Activated B cell treated with CpG ODN at 0.5 μM for 24 hours (primary cell): ENCODE measurements at regions of chr2 and their contacts with region 1.

Region 1: DNA sequence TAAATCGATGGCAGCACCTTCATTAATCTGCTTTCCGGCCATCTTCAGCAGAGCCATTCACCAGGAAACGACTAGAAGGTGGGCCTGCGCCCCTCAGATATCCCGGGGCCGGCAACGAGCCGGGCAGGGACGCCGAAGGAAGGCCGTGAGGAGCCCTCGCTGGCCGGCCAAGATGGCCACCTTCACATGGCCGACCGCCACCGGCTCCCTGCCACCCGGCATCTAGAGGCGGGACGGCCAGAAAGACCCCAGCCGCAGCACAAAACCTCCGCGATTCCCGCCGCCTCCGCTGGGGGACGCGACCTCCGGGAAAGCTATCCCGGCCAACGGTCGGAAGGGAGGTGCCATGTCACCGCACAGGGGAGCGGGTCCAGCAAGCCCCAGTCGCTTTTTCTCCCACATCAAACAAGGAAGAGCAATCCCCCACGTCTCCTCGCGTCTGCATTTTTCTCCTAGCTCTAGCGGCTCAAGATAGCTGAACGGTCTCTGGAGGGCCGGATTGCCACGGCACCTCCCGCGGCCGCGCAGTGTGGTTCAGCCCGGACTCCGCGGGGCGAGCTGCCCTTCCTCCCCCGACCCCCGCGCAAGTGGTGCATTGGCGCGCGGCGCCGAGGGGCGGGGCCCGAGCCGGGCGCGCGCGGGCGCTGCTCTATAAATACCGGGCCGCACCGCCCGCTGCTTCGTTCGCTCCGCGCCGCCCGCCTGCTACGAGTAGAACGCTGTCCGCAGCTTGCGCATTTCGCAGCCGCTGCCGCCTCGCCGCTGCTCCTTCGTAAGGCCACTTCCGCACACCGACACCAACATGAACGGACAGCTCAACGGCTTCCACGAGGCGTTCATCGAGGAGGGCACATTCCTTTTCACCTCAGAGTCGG is at the start of gene MAT2A:
- DNase-seq: peak; percentile 94
- ATAC-seq: peak; percentile 80
- H3K4me3 Mint-ChIP-seq: peak within 1 kb of the TSS; percentile 96
- H3K27ac Mint-ChIP-seq: peak within 1 kb of the TSS; percentile 99
- H3K4me1 Mint-ChIP-seq: peaks cover 37% of the 10 kb centered on the region
- H3K27me3 Mint-ChIP-seq: no peaks in the 10 kb centered on the region
- CTCF ChIP-seq: no peak
- total RNA-seq, gene MAT2A: 228 and 265 TPM in 2 replicates

Region 2: GRCh38 chr2:85390941-85391669 is 147.6 kb before region 1 on chr2:
- CTCF ChIA-PET with region 1: interaction called, 21 read pairs
- POLR2A ChIA-PET with region 1: interaction called, 43 read pairs
- intact Hi-C with region 1: loop called (anchors 1 kb)
- DNase-seq: peak; percentile 69
- ATAC-seq: peak; percentile 22
- H3K4me3 Mint-ChIP-seq: no peak overlapping the region
- H3K27ac Mint-ChIP-seq: peak overlapping the region; percentile 81
- H3K4me1 Mint-ChIP-seq: peaks cover 30% of the 10 kb centered on the region
- H3K27me3 Mint-ChIP-seq: no peaks in the 10 kb centered on the region
- CTCF ChIP-seq: no peak

Region 3: DNA sequence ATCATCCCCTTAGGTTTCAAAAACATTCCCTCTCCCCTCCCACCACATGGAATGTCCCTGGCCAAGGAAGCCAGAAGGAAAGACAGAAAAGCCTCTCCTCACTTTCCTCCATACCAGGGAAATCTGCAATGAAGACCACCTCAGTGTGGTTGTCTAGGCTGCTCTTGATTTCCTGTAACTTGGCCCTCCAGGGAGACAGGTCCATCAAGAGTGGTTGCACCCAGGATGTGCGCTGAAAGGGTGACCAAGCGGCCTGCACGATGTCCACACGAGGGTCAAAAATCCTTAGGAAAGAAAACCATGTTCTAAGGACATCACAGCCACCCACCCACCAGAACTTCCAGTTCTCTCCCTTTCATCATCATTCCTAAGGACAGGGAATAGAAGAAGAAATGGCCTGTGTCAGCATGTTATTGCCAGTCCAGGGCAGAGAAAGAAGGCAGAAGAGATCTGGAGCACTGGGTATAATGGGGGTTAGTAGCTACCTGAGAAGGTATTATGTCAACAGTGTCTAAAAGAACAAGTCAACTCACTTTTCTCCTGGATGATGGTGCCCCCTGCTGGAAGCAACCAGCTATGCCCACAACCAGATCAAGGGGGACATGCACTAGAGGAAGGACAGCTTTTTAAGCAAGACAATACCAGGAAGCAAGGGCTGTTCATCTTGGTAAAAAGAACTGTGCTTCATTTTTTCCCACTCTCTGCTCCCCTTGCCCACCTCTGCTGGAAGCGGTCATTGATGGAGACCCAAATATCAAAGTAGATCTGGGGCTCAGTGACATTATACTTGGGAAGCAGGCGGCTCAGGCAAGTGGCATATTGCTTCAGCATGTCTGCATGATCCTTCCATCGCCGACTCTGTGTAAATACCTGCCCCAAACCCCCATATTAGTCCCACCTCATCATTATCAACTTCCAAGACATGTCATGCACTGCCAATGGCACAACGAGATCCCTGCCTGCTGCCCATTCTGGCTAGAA is 13.3 kb after region 1 on chr2:
- CTCF ChIA-PET with region 1: interaction called, 52 read pairs
- POLR2A ChIA-PET with region 1: interaction called, 84 read pairs
- intact Hi-C with region 1: loop called (anchors 1 kb)
- DNase-seq: peak; percentile 63
- ATAC-seq: peak; percentile 98
- H3K4me3 Mint-ChIP-seq: no peak overlapping the region
- H3K27ac Mint-ChIP-seq: no peak overlapping the region
- H3K4me1 Mint-ChIP-seq: peaks cover 4% of the 10 kb centered on the region
- H3K27me3 Mint-ChIP-seq: no peaks in the 10 kb centered on the region
- CTCF ChIP-seq: peak; percentile 28

Region 4: DNA sequence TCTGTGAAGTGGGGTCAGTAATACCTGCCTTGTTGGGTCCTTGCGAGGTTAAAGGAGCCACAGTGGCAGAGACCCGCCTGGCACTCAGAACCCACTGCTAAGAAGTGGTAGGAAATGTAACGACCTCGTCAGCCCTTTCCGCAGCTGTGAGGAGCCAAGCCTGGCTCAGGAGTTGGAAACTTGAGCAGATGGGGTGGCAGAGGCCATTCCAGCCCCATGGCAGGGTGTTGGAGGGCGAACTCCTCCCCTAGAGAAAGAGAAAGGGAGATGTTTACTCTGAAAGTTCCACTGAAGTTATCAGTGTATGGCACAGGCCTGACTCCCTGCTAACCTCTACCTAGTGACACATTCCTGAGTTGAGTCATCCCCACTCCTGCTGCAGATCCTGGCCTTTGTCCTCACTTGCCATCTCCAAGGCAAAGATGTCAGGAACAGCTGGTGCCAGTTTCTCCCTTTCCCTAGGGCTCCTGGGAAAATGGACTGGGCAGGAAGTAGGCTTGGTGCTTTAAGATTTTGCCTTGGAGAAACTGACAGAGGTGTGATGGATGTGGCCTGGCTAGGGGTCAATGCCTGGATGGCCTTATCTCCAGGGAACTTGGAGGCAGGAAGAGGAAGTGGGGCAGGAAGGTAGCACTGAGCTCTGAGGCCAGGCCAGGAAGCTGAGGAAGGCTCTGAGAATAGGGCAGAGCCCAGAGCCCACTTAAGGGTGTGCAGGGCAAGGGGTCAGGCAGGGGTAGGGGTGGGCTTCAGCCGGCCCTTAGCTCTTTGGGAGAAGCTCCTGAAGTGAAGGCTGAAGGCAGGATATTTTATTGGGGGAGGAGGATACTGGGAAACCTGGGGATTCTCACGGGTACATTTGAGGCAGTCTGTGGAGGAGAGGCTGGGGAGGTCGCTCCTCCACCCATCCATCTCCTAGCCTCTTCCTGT is 46.4 kb after region 1 on chr2:
- CTCF ChIA-PET with region 1: no interaction called
- POLR2A ChIA-PET with region 1: interaction called, 10 read pairs
- intact Hi-C with region 1: no loop called
- DNase-seq: no peak
- ATAC-seq: peak; percentile 43
- H3K4me3 Mint-ChIP-seq: peak overlapping the region; percentile 82
- H3K27ac Mint-ChIP-seq: peak overlapping the region; percentile 63
- H3K4me1 Mint-ChIP-seq: peaks cover 46% of the 10 kb centered on the region
- H3K27me3 Mint-ChIP-seq: no peaks in the 10 kb centered on the region
- CTCF ChIP-seq: no peak

Region 5: DNA sequence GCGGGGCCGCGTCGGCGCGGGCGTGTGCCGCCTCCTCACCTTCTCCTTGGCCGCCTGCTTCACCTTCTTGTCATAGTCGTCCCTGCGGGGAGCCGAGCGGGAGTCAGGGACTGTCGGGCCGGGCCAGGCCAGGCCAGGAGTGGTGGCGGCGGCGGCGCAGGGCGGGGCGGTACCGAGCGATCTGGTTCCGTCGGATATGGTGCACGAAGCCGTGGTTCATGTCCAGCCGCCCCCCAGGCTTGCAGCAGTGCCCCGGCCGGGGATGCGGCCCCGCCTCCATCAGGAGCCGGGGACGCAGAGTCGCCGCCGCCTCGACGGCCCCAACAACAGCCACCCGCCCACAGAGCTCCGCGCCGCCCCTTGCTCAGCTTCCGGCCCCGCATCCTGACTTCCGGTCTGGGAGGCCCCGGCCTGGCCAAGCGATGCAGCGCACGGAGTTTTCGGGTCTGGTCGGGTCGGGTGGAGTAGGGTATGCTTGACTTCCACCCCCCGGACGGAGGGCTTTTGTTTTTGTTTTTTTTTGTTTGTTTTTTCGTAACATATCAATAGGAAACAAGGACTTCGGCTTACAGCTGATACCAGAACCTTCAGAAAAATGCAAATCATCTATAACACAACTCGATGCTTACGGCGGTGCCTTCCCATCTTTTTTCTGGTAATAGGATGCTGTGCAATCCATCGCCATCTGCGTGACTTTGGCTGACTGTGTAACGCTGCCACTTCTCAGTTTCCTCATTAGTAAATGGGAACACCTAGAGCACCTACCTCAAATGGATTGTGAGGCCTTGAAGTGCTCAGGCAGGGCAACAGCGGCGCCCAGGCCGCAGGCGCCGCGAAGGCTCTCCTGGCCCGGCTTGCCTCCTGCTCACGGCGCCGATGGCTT is 73.2 kb after region 1 on chr2 and contains the start of gene C2orf68:
- CTCF ChIA-PET with region 1: no interaction called
- POLR2A ChIA-PET with region 1: interaction called, 17 read pairs
- intact Hi-C with region 1: loop called (anchors 2 kb)
- DNase-seq: peak; percentile 81
- ATAC-seq: peak; percentile 73
- H3K4me3 Mint-ChIP-seq: peak within 1 kb of the TSS; percentile 98
- H3K27ac Mint-ChIP-seq: peak within 1 kb of the TSS; percentile 91
- H3K4me1 Mint-ChIP-seq: peaks cover 39% of the 10 kb centered on the region
- H3K27me3 Mint-ChIP-seq: no peaks in the 10 kb centered on the region
- CTCF ChIP-seq: no peak
- total RNA-seq, gene C2orf68: 49.7 and 61.5 TPM in 2 replicates